Left cardiac atrium (tissue), 4 donors: ENCODE measurements at regions of chr1 and their contacts with region 1.

Region 1: DNA sequence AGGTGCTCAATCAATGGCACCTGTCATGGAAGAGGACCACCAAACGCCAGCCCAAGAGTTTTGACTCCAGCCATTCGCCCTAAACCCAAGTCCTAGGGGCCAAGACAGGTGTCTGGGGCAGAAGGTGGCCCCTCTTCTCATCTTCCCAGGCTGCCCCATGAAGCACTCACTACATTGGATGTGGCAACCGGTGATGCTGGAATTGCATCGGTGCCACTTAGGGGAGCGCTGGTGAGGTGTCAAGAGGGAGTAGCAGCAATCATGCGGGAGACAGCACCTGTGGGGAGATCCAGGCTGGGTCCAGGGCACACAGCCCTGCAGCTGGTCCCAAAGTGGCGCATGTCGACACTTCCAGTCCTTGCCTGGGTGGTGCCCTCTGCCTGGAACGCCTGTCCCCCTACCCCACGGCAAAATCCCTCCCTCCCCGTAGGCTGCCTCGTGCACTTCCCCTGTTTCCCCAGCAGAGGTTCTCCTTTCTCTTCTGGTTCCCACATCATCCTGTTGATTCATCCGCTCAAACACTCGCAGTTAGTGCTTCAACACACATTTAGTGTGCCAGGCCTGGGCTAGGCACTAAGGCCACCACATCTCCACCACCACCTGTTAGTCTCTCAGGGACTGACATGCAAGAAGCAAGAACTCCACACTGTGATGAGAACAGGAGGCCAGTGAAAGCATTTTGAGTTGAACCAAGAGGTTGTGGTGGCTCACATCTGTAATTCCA is 18.5 kb downstream of the PLA2G2D start:
- DNase-seq: peak; percentile 53
- ATAC-seq: peak; percentile 86 to 88

Region 2: GRCh38 chr1:18597160-18598042 is 1503.4 kb before region 1 on chr1:
- intact Hi-C with region 1: no loop called
- DNase-seq: peak; percentile 59
- ATAC-seq: peak; percentile 81

Region 3: DNA sequence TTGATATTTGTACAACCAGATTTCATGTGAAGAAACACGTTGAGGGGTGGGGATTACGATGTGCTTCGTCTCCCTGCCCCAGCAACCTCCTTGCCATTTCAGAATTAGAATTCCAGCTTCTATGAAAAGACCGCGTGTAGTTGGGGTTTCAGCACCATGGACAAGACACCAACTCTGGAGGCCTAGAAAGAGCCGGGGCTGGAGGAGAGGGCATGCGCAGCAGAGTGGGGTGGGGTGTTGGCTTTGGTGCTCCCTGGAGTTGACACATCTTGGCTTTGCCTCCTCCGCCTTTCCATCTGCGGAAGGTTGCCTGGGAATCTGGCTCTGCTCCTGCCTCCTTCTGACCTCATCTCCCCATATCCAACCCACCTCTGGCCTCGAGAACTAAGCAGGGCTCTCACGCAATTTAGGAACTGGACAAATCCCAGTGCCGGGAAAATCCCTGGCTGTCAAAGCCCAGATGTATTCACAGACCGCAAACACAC is 424.3 kb before region 1 on chr1:
- intact Hi-C with region 1: no loop called
- DNase-seq: peak; percentile 83
- ATAC-seq: peak; percentile 86 to 89

Region 4: DNA sequence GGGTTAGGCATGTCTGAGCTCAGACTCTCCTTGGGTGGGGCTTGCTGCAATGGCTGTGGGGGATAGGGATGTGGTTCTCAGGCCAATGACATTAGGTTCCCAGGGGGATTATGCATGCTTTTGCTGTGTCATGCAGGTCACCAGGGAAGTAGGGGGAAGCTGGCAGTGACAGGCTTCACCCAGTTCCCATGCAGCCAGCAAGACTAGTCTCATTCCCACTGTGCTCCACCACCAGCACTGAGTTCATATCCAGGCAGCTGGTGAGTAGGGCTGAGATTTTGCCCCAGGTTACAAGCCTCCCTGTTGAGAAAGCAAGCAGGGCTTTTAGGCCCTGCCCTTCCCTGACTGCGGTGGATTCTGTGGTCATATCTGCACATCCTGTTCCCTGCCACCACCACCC is 62.9 kb before region 1 on chr1:
- intact Hi-C with region 1: no loop called
- DNase-seq: no peak
- ATAC-seq: peak in 1 of 2 donors; percentile 11

Region 5: GRCh38 chr1:20142001-20142710 is 41.4 kb after region 1 on chr1:
- intact Hi-C with region 1: loop called in 1 of 2 experiments (anchors 5 kb)
- DNase-seq: no peak
- ATAC-seq: no peak

Region 6: GRCh38 chr1:20151906-20152598 is 51.3 kb after region 1 on chr1:
- intact Hi-C with region 1: loop called in 1 of 2 experiments (anchors 2 kb)
- DNase-seq: peak; percentile 90
- ATAC-seq: peak; percentile 91 to 93

Region 7: DNA sequence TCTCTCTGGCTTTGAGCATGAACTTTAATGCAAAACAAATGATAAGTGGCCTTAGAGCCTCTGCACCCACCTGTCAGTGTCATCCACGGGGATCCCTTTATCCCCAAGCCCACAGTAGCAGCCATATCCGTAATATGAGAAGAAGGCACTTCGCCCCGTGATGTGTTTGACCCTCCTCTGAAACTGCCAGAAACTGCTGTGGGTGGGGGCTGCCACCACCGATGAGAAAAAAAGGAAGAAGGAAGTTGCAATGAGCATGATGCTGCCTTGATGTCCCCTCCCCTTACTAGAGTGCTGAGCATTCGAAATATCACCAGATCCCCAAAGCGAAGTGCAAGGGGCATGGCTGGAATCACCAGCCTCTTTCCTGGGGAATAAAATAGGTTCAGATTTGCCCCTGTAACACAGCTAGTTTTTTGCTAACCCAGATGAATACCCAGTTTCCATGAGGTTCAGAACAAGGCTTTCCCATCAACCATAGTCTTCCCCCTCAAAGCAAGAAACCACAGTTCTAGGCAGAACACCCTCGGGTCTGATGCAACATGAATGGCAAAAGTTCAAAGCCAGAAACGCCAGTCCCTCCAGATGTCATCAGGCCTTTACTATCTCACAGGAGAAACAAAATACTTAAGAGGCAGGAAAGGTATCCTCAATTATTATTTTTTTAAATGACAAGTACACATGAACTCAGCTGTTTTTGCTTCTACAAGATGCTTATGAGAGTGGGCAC is 74.3 kb after region 1 on chr1:
- intact Hi-C with region 1: no loop called
- DNase-seq: no peak
- ATAC-seq: peak in 1 of 2 donors; percentile 46

Region 8: DNA sequence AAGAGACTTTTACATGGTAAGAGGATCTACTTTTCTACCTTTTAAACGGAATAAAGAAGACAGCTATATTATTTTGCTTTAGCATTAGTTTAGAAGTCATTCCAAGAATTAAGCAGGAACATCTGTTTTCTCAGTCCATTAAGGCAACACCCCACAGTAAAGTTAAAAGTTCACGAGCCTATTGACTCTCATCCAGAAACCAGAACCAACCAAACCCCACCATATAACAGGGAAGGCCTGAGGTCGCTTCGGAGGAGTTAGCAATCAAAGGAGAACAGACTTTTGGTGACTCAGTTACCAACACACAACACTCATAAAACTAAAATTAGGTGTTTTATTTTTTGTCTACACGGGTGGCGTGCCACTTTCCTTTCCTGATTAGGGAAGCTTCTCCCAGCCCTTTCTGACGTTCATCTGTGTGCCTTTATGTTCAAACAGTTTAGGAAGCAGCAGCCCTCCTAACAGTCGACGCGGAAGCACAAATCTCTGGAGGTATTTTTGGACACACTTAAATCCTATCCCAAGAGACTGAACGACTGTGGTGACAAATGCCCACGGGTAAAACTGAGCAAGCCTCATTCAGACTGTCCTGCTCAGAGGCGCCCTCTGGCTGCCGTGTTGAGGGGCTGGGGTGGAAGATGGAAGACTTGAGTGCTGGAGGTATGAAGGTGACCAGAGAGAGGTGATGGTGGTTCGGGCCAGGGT is 94.1 kb after region 1 on chr1:
- intact Hi-C with region 1: loop called in 1 of 2 experiments (anchors 10 kb)
- DNase-seq: peak; percentile 76
- ATAC-seq: peak; percentile 73 to 83